Gastrocnemius medialis (tissue), 4 donors: ENCODE measurements at regions of chr9 and their contacts with region 1.

Region 1: GRCh38 chr9:75866273-75866871 is 24.1 kb upstream of the PCSK5 start:
- DNase-seq: no peak
- ATAC-seq: no peak
- H3K4me3 ChIP-seq: no peak overlapping the region
- H3K27ac ChIP-seq: no peak overlapping the region
- H3K4me1 ChIP-seq: no peaks in the 10 kb centered on the region
- H3K27me3 ChIP-seq: no peaks in the 10 kb centered on the region
- CTCF ChIP-seq: peak in 4 of 5 experiments; percentile 23 to 72 (median 52)
- POLR2A ChIP-seq: no peak

Region 2: GRCh38 chr9:75185585-75186170 is 680.7 kb before region 1 on chr9:
- in situ Hi-C with region 1: loop called in 1 of 4 experiments (anchors 25 kb)
- intact Hi-C with region 1: no loop called
- DNase-seq: no peak
- ATAC-seq: no peak
- H3K4me3 ChIP-seq: no peak overlapping the region
- H3K27ac ChIP-seq: no peak overlapping the region
- H3K4me1 ChIP-seq: no peaks in the 10 kb centered on the region
- H3K27me3 ChIP-seq: no peaks in the 10 kb centered on the region
- CTCF ChIP-seq: peak in 2 of 5 experiments; percentile 20 to 39
- POLR2A ChIP-seq: no peak

Region 3: DNA sequence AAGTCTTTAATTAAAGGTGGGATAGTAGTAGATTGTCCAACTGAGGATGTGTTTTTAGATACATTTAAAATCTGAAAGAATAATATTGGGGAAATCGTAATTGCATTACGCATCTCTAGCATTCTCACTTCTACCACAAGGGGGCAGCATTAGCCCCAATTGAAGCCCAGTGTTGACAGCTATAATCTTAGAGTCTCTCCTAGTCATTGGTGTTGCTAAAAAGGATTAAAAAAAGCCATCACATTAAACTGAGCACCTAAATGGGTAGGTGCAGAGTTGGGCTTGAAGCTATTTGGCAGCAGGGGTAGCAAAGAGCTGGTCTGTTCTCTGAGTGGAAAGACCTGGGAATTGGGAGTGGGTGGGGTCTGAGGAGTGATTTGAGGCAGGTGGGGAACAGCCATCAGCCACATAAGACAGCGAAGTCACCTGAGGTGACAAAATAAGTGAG is 600.8 kb before region 1 on chr9:
- in situ Hi-C with region 1: no loop called
- intact Hi-C with region 1: loop called (anchors 5 kb)
- DNase-seq: no peak
- ATAC-seq: no peak
- H3K4me3 ChIP-seq: no peak overlapping the region
- H3K27ac ChIP-seq: no peak overlapping the region
- H3K4me1 ChIP-seq: peaks cover 0 to 4% of the 10 kb centered on the region in 2 donors
- H3K27me3 ChIP-seq: no peaks in the 10 kb centered on the region
- CTCF ChIP-seq: peak; percentile 41 to 79 (median 63)
- POLR2A ChIP-seq: no peak

Region 4: DNA sequence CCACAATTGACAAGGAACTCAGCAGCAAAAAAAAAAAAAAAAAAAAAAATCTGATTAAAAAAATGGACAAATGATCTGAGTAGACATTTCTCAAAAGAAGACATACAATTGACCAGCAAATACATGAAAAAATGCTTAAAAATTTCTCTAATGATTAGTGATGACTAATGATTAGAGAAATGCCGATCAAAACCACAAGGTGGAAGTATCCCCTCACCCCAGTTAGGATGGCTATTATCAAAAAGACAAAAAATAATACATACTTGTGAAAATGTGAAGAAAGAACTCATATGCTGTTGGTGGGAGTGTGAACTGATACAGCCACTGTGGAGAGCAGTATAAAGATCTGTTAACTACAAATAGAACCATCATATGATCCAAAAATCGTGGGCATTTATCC is 532.7 kb before region 1 on chr9:
- in situ Hi-C with region 1: loop called in 1 of 4 experiments (anchors 10 kb)
- intact Hi-C with region 1: no loop called
- DNase-seq: no peak
- ATAC-seq: no peak
- H3K4me3 ChIP-seq: no peak overlapping the region
- H3K27ac ChIP-seq: no peak overlapping the region
- H3K4me1 ChIP-seq: no peaks in the 10 kb centered on the region
- H3K27me3 ChIP-seq: peaks cover 0 to 3% (median 0%) of the 10 kb centered on the region in 3 donors
- CTCF ChIP-seq: peak in 4 of 5 experiments; percentile 9 to 23 (median 20)
- POLR2A ChIP-seq: no peak